ENCODE measurements at regions of chr19 and their contacts with region 1.

Region 1: GRCh38 chr19:29873024-29873800 is 61.4 kb downstream of the CCNE1 start:
- DNase-seq: peak; percentile 32 to 65 (median 53)
- H3K4me3 ChIP-seq: peak overlapping the region in 2 of 4 donors; percentile 45 to 64
- H3K27ac ChIP-seq: no peak overlapping the region
- H3K4me1 ChIP-seq: peaks cover 3 to 20% of the 10 kb centered on the region in 2 donors
- H3K27me3 ChIP-seq: no peaks in the 10 kb centered on the region
- CTCF ChIP-seq: peak; percentile 33 to 94 (median 70)
- POLR2A ChIP-seq: no peak

Region 2: DNA sequence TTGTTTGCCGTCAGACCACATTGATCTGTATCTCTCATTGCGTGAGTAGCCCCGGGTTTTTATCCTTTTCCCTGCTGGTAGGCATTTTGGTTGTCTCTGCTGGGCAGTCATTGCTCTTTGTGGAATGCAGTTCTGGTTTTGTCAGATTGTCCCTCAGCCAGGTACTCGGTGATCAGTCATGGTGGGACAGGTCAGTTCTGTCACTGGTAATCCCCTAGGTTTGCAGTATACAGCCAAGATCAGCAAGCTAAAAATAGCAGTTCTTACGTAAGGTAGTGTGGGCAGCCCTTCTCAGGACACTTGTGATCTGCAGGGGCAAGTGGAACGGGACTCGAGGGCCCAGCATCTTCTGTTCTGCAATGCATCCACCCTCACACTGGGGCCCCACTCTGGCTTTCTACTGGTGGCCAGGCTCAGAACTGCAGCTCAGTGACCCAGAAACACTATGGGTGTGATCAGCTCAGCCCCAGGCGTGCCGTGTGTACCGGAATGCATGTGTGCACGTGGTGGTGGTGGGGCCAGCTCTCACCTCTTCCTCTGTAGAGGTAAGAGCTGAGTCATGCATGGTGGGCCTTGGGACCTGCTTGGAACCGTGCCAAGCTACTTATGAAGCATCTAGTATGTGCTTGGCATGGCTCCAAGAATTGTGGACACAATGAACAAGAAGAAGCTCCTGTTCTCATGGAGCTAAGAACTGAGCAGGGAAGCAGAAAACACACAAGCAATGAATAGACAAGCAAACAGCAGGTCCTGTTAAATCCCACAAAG is 201.6 kb before region 1 on chr19:
- intact Hi-C with region 1: no loop called
- DNase-seq: peak in 3 of 7 donors; percentile 34 to 67 (median 43)
- H3K4me3 ChIP-seq: no peak overlapping the region
- H3K27ac ChIP-seq: peak overlapping the region in 1 of 5 donors; percentile 16
- H3K4me1 ChIP-seq: peaks cover 7 to 16% of the 10 kb centered on the region in 2 donors
- H3K27me3 ChIP-seq: no peaks in the 10 kb centered on the region
- CTCF ChIP-seq: peak in 1 of 6 experiments; percentile 10
- POLR2A ChIP-seq: no peak

Region 3: GRCh38 chr19:29731331-29731850 is 141.8 kb before region 1 on chr19:
- intact Hi-C with region 1: loop called (anchors 2 to 5 kb)
- DNase-seq: no peak
- H3K4me3 ChIP-seq: no peak overlapping the region
- H3K27ac ChIP-seq: no peak overlapping the region
- H3K4me1 ChIP-seq: peaks cover 0 to 9% of the 10 kb centered on the region in 2 donors
- H3K27me3 ChIP-seq: no peaks in the 10 kb centered on the region
- CTCF ChIP-seq: no peak
- POLR2A ChIP-seq: no peak

Region 4: GRCh38 chr19:29761575-29762232 is 111.5 kb before region 1 on chr19:
- intact Hi-C with region 1: loop called (anchors 2 to 5 kb)
- DNase-seq: no peak
- H3K4me3 ChIP-seq: no peak overlapping the region
- H3K27ac ChIP-seq: no peak overlapping the region
- H3K4me1 ChIP-seq: no peaks in the 10 kb centered on the region
- H3K27me3 ChIP-seq: no peaks in the 10 kb centered on the region
- CTCF ChIP-seq: no peak
- POLR2A ChIP-seq: no peak

Region 5: DNA sequence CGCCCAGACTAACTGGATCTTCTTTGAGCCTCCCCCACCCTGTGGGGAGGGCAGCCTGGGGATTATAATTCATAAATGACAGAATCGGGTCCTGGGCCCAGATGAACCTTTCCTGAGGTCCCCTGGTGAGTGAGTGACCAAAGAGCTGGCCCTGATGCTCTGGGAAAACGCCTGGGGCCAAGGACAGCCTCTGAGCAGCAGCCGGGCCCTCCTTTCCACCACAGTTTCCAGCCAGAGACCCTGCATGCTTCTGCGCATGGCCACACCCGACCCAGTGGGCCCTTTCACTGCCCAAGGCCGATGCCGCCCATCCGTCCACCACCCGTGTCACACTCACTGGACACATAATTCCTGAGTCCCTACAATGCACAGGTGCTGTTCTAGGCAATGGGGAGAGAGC is 105.0 kb before region 1 on chr19:
- intact Hi-C with region 1: loop called in 1 of 2 experiments (anchors 5 kb)
- DNase-seq: no peak
- H3K4me3 ChIP-seq: no peak overlapping the region
- H3K27ac ChIP-seq: no peak overlapping the region
- H3K4me1 ChIP-seq: no peaks in the 10 kb centered on the region
- H3K27me3 ChIP-seq: no peaks in the 10 kb centered on the region
- CTCF ChIP-seq: no peak
- POLR2A ChIP-seq: no peak

Measured in adrenal gland (tissue), 19 donors.